ENCODE measurements at regions of chr22 and their contacts with region 1.

Region 1: DNA sequence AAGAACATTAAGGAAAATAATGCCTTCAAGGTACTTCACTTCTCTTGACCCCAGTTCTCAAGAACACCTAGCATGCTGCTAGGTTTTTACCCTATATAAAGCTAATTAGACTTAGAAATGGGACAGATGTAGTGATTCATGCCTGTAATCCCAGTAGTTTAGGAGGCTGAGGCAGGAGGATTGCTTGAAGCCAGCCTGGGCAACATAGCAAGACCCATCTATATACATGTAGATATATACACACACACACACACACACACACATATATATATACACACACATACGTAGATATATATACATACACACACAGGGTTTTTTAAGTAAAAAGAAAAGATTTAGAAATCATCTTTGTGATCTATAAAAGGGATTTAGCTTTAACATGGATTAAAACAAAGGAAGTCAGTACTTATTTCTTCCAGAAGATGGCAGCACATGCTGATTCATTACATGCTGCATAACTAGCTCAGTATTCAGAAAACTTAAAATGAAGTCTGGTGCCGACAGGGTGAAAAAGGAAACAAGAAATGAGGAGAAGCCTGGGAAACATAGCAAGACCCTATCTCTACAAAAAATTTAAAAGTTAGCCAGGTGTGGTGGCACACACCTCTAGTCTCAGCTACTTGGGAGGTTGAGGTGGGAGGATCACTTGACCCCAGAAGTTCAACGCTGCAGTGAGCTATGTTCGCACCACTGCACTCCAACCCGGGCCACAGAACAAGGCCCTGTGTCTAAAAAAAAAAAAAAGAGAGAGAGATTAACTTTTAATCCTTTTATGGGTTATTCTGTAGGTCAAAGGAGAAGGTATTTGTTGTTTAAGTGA is 28.5 kb upstream of the RBX1 start:
- DNase-seq: no peak
- ATAC-seq: peak; percentile 86
- H3K4me3 Mint-ChIP-seq: peak overlapping the region; percentile 15
- H3K27ac Mint-ChIP-seq: peak overlapping the region; percentile 6
- H3K4me1 Mint-ChIP-seq: peaks cover 4% of the 10 kb centered on the region
- H3K27me3 Mint-ChIP-seq: no peaks in the 10 kb centered on the region
- CTCF ChIP-seq: no peak

Region 2: GRCh38 chr22:41022470-41023298 is 100.0 kb after region 1 on chr22:
- CTCF ChIA-PET with region 1: interaction called, 13 read pairs
- POLR2A ChIA-PET with region 1: interaction called, 28 read pairs
- intact Hi-C with region 1: loop called (anchors 2 kb)
- DNase-seq: peak; percentile 87
- ATAC-seq: peak; percentile 75
- H3K4me3 Mint-ChIP-seq: peak overlapping the region; percentile 85
- H3K27ac Mint-ChIP-seq: peak overlapping the region; percentile 87
- H3K4me1 Mint-ChIP-seq: peaks cover 19% of the 10 kb centered on the region
- H3K27me3 Mint-ChIP-seq: no peaks in the 10 kb centered on the region
- CTCF ChIP-seq: no peak

Region 3: GRCh38 chr22:41106122-41106968 is 183.7 kb after region 1 on chr22:
- CTCF ChIA-PET with region 1: interaction called, 12 read pairs
- POLR2A ChIA-PET with region 1: no interaction called
- intact Hi-C with region 1: no loop called
- DNase-seq: no peak
- ATAC-seq: no peak
- H3K4me3 Mint-ChIP-seq: no peak overlapping the region
- H3K27ac Mint-ChIP-seq: peak overlapping the region; percentile 8
- H3K4me1 Mint-ChIP-seq: peaks cover 51% of the 10 kb centered on the region
- H3K27me3 Mint-ChIP-seq: no peaks in the 10 kb centered on the region
- CTCF ChIP-seq: no peak

Region 4: GRCh38 chr22:41132550-41132949 is 209.9 kb after region 1 on chr22:
- CTCF ChIA-PET with region 1: interaction called, 12 read pairs
- POLR2A ChIA-PET with region 1: no interaction called
- intact Hi-C with region 1: no loop called
- DNase-seq: no peak
- ATAC-seq: no peak
- H3K4me3 Mint-ChIP-seq: no peak overlapping the region
- H3K27ac Mint-ChIP-seq: no peak overlapping the region
- H3K4me1 Mint-ChIP-seq: no peaks in the 10 kb centered on the region
- H3K27me3 Mint-ChIP-seq: no peaks in the 10 kb centered on the region
- CTCF ChIP-seq: no peak

Measured in activated B cell treated with CpG ODN at 0.5 μM for 24 hours (primary cell).